PC-3 (cell line): ENCODE measurements at regions of chr1 and their contacts with region 1.

Region 1: GRCh38 chr1:218480137-218480536 is 135.0 kb downstream of the TGFB2 start:
- DNase-seq: peak; percentile 83
- ATAC-seq: no peak
- H3K4me3 ChIP-seq: no peak overlapping the region
- H3K27ac ChIP-seq: peak overlapping the region; percentile 74
- H3K4me1 ChIP-seq: peaks cover 57% of the 10 kb centered on the region
- H3K27me3 ChIP-seq: no peaks in the 10 kb centered on the region
- CTCF ChIP-seq: no peak

Region 2: GRCh38 chr1:218259800-218260199 is 220.3 kb before region 1 on chr1:
- CTCF ChIA-PET with region 1: no interaction called
- POLR2A ChIA-PET with region 1: no interaction called
- intact Hi-C with region 1: no loop called
- DNase-seq: peak; percentile 64
- ATAC-seq: 0 out of 2 replicates have a peak, but pooled peaks have one; percentile 29
- H3K4me3 ChIP-seq: no peak overlapping the region
- H3K27ac ChIP-seq: no peak overlapping the region
- H3K4me1 ChIP-seq: no peaks in the 10 kb centered on the region
- H3K27me3 ChIP-seq: no peaks in the 10 kb centered on the region
- CTCF ChIP-seq: peak; percentile 79

Region 3: DNA sequence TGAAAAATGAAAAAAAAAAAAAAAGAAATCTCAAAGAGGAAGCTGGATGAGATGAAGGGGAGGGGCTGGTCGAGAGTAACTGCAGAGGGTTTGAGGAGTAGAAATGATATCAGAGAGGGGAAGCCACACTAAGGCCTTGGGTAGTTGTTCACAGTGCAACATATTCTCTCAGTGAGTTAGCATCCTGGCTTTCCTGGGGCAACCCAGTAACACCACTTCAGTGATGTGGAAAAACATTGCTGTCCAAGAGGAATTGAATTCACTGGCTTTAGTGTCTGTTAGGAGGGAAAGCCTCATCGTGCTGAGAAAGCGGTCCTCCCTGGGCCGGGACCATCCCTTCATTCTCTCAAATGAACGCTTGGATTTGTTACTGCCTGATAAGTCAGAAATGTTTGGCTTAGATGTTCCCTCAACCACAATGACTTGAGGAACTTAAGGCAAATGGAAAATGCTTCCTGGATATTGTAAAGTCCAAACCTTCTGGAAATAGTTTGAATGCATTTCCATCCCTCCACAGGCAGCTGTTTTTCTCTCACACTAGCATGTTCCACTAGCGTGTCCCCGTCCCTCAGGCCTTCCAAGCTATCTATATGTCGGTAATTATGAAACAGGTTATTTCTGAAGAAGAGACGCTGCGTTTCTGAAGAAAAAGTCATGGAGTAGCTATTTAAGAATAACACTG is 122.8 kb before region 1 on chr1:
- CTCF ChIA-PET with region 1: no interaction called
- POLR2A ChIA-PET with region 1: no interaction called
- intact Hi-C with region 1: no loop called
- DNase-seq: no peak
- ATAC-seq: no peak
- H3K4me3 ChIP-seq: no peak overlapping the region
- H3K27ac ChIP-seq: no peak overlapping the region
- H3K4me1 ChIP-seq: peaks cover 29% of the 10 kb centered on the region
- H3K27me3 ChIP-seq: no peaks in the 10 kb centered on the region
- CTCF ChIP-seq: no peak

Region 4: GRCh38 chr1:218459878-218460711 is 20.0 kb before region 1 on chr1:
- CTCF ChIA-PET with region 1: no interaction called
- POLR2A ChIA-PET with region 1: no interaction called
- intact Hi-C with region 1: loop called (anchors 1 kb)
- DNase-seq: peak; percentile 99
- ATAC-seq: peak; percentile 95
- H3K4me3 ChIP-seq: peak overlapping the region; percentile 31
- H3K27ac ChIP-seq: peak overlapping the region; percentile 56
- H3K4me1 ChIP-seq: peaks cover 38% of the 10 kb centered on the region
- H3K27me3 ChIP-seq: no peaks in the 10 kb centered on the region
- CTCF ChIP-seq: no peak

Region 5: DNA sequence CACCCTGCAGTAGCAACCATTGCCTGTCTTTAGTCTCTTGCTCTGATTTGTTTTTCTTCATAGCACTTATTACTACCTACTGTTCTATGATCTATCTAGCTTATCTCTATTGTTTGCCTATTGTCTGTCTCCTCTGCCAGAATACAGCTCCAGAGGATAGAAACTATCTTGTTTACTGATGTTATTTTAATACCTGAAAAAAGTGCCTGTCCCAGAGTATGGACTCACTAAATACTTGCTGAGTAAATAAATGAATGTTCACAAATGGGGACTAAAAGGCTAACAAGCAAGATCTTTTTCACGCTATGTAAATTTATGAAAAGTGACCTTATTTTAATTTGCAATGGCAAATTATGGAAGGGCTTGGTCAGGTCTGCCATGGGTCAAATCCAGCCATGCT is 10.3 kb after region 1 on chr1:
- CTCF ChIA-PET with region 1: no interaction called
- POLR2A ChIA-PET with region 1: no interaction called
- intact Hi-C with region 1: no loop called
- DNase-seq: no peak
- ATAC-seq: no peak
- H3K4me3 ChIP-seq: no peak overlapping the region
- H3K27ac ChIP-seq: peak overlapping the region; percentile 36
- H3K4me1 ChIP-seq: peaks cover 74% of the 10 kb centered on the region
- H3K27me3 ChIP-seq: no peaks in the 10 kb centered on the region
- CTCF ChIP-seq: no peak

Region 6: GRCh38 chr1:218537122-218537904 is 57.2 kb after region 1 on chr1:
- CTCF ChIA-PET with region 1: no interaction called
- POLR2A ChIA-PET with region 1: no interaction called
- intact Hi-C with region 1: loop called (anchors 5 kb)
- DNase-seq: peak; percentile 90
- ATAC-seq: peak; percentile 84
- H3K4me3 ChIP-seq: peak overlapping the region; percentile 2; the same call in 1 of the 2 replicates
- H3K27ac ChIP-seq: peak overlapping the region; percentile 23
- H3K4me1 ChIP-seq: peaks cover 24% of the 10 kb centered on the region
- H3K27me3 ChIP-seq: no peaks in the 10 kb centered on the region
- CTCF ChIP-seq: no peak

Region 7: GRCh38 chr1:218620956-218621355 is 140.8 kb after region 1 on chr1:
- CTCF ChIA-PET with region 1: no interaction called
- POLR2A ChIA-PET with region 1: no interaction called
- intact Hi-C with region 1: no loop called
- DNase-seq: peak; percentile 87
- ATAC-seq: peak; percentile 99
- H3K4me3 ChIP-seq: no peak overlapping the region
- H3K27ac ChIP-seq: peak overlapping the region; percentile 57
- H3K4me1 ChIP-seq: peaks cover 14% of the 10 kb centered on the region
- H3K27me3 ChIP-seq: no peaks in the 10 kb centered on the region
- CTCF ChIP-seq: no peak